ENCODE measurements at regions of chr11 and their contacts with region 1.

Region 1: GRCh38 chr11:33829433-33830141 is 55.3 kb upstream of the FBXO3 start:
- DNase-seq: peak; percentile 96
- H3K4me3 ChIP-seq: peak overlapping the region; percentile 42
- H3K27ac ChIP-seq: no peak overlapping the region
- H3K4me1 ChIP-seq: peaks cover 4% of the 10 kb centered on the region
- H3K27me3 ChIP-seq: no peaks in the 10 kb centered on the region
- CTCF ChIP-seq: peak; percentile 100

Region 2: DNA sequence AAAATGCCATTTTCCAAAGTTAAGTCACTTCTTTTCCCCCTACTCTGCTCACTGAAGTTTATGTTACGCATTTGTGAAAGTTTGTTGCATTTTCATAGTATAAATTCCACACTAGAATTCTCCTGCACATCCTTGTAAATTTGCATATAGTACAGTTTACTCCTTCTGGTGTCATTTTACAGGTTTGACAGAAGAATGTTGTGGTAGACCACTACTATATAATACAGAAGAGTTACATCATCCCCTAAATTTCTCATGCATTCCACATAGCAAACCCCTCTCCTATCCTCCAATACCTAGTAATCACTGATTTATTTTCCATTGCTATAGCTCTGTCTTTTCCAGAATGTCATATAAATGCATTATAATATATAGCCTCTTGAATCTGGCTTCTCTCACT is 1099.6 kb before region 1 on chr11:
- CTCF ChIA-PET with region 1: no interaction called
- POLR2A ChIA-PET with region 1: no interaction called
- intact Hi-C with region 1: loop called (anchors 10 kb)
- DNase-seq: no peak
- H3K4me3 ChIP-seq: no peak overlapping the region
- H3K27ac ChIP-seq: no peak overlapping the region
- H3K4me1 ChIP-seq: no peaks in the 10 kb centered on the region
- H3K27me3 ChIP-seq: peaks cover 5% of the 10 kb centered on the region
- CTCF ChIP-seq: no peak

Region 3: DNA sequence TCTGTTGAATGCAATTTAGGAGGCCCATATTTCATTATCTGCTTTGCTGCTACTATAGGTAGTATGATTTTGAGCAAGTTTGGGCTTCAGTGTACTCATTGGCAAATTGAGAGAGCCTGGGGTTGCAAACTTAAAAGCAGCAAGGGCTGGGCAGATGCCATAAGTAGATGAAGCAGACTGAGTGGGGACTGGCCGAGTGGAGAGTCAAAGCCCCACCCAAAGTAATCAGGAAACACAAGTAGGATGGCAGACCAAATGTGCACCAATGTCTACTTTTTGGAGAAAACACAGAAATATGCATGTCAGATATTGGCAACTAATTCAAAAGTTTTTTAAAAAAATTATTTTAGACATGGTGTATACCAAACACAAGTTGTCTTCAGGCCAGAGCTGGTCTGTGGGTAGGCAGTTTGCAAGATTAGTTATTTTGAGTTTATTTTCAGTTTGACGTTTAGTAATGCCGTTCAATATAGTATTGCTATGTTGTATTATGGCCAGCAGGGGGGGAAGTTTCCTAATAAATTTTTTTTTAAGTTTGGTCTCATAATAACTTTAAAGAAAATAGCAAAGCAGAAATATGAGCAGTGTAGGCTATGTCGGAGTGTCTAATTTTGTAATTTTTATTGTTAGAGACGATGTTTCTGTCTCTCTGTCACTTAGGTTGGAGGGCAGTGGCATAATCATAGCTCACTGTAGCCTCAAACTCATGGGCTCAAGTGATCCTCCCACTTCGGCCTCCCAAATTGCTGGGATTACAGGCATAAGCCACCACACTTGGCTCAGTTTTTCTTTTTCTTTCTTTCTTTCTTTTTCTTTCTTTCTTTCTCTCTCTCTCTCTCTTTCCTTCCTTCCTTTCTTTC is 467.3 kb before region 1 on chr11:
- CTCF ChIA-PET with region 1: interaction called, 3 read pairs
- POLR2A ChIA-PET with region 1: no interaction called
- intact Hi-C with region 1: loop called (anchors 1 kb)
- DNase-seq: peak; percentile 86
- H3K4me3 ChIP-seq: no peak overlapping the region
- H3K27ac ChIP-seq: no peak overlapping the region
- H3K4me1 ChIP-seq: no peaks in the 10 kb centered on the region
- H3K27me3 ChIP-seq: no peaks in the 10 kb centered on the region
- CTCF ChIP-seq: peak; percentile 97

Region 4: GRCh38 chr11:33700425-33701271 is 128.9 kb before region 1 on chr11 and contains the start of gene C11orf91:
- CTCF ChIA-PET with region 1: interaction called, 8 read pairs
- POLR2A ChIA-PET with region 1: no interaction called
- intact Hi-C with region 1: loop called (anchors 5 kb)
- DNase-seq: peak; percentile 100
- H3K4me3 ChIP-seq: peak within 1 kb of the TSS; percentile 42
- H3K27ac ChIP-seq: peak within 1 kb of the TSS; percentile 74
- H3K4me1 ChIP-seq: peaks cover 40% of the 10 kb centered on the region
- H3K27me3 ChIP-seq: no peaks in the 10 kb centered on the region
- CTCF ChIP-seq: no peak
- total RNA-seq, gene C11orf91: not detected in 2 replicates

Region 5: GRCh38 chr11:33808228-33808828 is 21.3 kb before region 1 on chr11:
- CTCF ChIA-PET with region 1: interaction called, 35 read pairs
- POLR2A ChIA-PET with region 1: no interaction called
- intact Hi-C with region 1: loop called (anchors 1 kb)
- DNase-seq: peak; percentile 98
- H3K4me3 ChIP-seq: no peak overlapping the region
- H3K27ac ChIP-seq: no peak overlapping the region
- H3K4me1 ChIP-seq: peaks cover 4% of the 10 kb centered on the region
- H3K27me3 ChIP-seq: no peaks in the 10 kb centered on the region
- CTCF ChIP-seq: peak; percentile 100

Region 6: GRCh38 chr11:34161812-34162499 is 332.4 kb after region 1 on chr11:
- CTCF ChIA-PET with region 1: no interaction called
- POLR2A ChIA-PET with region 1: no interaction called
- intact Hi-C with region 1: no loop called
- DNase-seq: no peak
- H3K4me3 ChIP-seq: no peak overlapping the region
- H3K27ac ChIP-seq: no peak overlapping the region
- H3K4me1 ChIP-seq: no peaks in the 10 kb centered on the region
- H3K27me3 ChIP-seq: no peaks in the 10 kb centered on the region
- CTCF ChIP-seq: no peak

Measured in A673 (cell line).